OCI-LY7 (cell line): ENCODE measurements at regions of chr10 and their contacts with region 1.

Region 1: DNA sequence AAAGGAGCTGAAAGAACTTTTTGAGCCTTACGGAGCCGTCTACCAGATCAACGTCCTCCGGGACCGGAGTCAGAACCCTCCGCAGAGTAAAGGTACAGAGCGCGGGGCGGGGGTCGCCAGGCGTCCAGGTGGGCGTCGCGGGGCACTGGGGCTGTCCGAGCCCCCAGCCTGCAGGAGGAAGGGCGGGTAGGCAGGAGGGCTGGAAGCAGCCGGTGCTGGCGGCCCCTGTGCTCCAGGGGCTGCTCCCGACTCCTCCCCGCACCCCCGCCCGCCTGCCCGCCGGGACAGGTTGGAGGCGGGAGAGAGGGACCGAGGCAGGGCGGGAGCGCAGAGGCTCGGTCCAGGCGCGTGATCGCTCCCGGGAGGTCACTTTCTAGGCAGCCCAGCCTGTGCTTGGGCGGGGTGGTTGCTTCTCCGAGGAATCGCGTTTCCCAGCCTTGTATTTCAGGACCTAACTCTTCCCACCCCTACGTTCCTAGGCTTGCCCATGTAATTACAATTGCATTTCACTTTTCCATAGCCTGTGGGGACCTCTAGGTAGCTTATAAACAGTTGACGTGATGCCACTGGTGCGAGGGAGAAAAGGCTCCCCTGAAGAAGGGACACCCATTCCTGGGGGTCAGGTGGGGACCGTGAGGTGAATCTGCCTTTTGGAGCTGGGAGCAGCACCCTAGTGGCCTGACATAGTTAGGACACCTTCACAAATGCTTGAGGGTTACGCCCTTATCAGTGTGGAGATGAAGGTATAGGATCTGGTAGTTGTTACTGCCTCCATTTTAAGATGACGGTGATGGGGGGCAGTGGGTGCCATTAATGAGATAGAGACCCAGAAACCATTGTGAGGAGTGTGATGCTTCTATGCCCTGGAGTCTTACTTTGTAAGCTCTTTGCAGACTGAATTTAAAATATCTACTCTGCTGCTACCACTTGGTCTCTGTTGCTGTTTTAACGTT is 148.2 kb downstream of the CELF2 start:
- DNase-seq: peak; percentile 77
- H3K4me3 ChIP-seq: peak overlapping the region; percentile 70
- H3K27ac ChIP-seq: no peak overlapping the region
- H3K4me1 ChIP-seq: peaks cover 44% of the 10 kb centered on the region
- CTCF ChIP-seq: peak; percentile 76

Region 2: DNA sequence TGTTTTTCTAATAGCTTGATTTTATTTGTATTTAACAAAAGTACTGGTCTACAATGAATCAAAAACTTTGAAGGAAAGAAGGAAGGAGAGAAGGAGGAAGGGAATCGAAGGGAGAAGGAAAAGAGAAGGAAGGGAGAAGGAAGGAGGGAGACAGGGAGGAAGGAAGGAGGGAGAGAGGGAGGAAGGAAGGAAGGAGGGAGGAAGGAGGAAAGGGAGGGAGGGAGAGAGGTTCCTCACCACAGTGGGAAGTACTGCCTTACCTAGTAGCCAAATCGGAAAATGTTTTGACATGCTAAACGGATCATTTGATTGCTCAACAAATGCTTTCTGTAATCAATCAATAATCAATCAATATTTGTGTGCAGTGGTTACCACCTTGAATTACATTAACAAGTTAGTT is 374.0 kb before region 1 on chr10:
- CTCF ChIA-PET with region 1: interaction called, 10 read pairs
- POLR2A ChIA-PET with region 1: no interaction called
- intact Hi-C with region 1: no loop called
- DNase-seq: no peak
- H3K4me3 ChIP-seq: no peak overlapping the region
- H3K27ac ChIP-seq: no peak overlapping the region
- H3K4me1 ChIP-seq: no peaks in the 10 kb centered on the region
- CTCF ChIP-seq: no peak

Region 3: DNA sequence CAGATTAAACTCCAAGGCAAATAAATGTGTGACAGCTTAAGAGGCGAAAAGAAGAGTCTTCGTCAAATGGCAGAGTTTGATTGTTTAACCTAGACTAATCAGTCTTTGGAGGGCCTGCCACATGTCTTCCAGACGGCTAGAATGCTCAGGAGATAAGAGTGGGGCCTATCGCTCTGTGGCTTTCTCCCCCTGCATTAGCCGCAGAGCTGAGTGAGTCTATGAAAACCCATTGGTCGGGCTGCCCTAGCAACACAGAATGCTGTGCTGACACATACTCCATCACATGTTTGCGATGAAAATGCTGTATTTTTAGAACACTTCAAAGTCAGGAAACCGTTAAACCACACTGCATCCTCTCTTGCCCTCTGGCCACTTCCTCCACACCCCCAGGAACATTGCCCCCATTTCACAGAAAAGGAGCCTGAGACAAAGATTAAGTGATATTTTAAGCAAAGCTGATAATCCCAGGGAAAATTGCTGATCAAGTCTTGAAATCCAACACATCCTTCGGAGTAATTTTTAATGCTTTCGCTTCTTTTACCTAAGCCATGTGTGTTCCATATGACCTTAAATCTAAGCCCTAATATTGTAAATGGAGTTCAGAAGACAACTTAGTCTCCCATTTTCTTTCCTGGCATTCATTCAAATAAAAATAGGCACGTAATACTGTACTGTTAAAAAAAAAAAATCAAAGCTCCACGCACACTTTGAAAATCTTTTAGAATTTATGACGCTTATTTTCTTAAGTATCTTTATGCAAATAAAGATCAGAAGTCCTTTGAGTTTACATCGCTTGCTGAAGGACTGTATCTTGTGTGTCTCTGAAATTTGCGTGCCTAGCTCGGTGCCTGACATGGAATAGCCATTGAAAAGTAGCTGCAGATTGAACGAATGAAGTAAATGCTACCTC is 13.0 kb after region 1 on chr10:
- CTCF ChIA-PET with region 1: no interaction called
- POLR2A ChIA-PET with region 1: interaction called, 13 read pairs
- intact Hi-C with region 1: no loop called
- DNase-seq: peak; percentile 85
- H3K4me3 ChIP-seq: peak overlapping the region; percentile 9
- H3K27ac ChIP-seq: peak overlapping the region; percentile 12
- H3K4me1 ChIP-seq: peaks cover 53% of the 10 kb centered on the region
- CTCF ChIP-seq: no peak

Region 4: DNA sequence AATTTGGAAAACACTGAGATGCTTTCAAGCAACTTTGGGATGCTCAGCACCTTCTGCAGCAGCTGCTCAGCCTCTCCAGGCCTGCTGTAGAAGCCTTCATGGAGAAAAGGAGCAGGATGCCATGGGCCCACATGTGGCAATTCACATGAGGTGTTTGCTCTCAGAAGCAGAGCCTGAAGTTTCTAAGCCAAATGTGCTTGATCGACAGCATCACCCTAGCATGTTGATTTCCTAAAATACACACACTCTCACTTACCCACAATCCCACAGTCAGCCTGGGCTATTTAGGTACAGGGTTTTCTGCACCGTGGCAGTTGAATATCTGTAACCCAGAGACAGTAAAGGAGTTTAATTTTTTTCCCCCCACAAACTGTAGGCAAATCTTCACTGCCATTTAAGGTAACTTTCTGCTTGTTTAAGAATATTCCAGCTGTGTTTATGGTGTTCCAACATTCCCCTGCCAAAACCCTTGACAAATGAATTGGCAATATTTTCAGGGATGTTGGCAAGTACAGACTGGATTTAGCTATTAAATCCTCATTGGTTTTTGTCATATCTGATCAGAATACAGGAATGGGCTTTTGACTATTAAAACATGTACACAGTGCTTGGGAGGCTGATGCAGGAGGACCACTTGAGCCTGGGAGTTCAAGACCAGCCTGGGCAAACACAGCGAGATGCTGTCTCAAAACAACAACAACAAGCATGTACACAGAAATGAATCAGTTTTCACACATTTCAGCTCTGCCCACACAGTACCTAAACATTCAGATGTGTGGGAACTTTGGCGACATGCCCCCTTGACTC is 96.0 kb after region 1 on chr10:
- CTCF ChIA-PET with region 1: interaction called, 4 read pairs
- POLR2A ChIA-PET with region 1: interaction called, 4 read pairs
- intact Hi-C with region 1: loop called (anchors 5 kb)
- DNase-seq: peak; percentile 29
- H3K4me3 ChIP-seq: no peak overlapping the region
- H3K27ac ChIP-seq: no peak overlapping the region
- H3K4me1 ChIP-seq: peaks cover 58% of the 10 kb centered on the region
- CTCF ChIP-seq: no peak